BJ (cell line): ENCODE measurements at regions of chr19 and their contacts with region 1.

Region 1: GRCh38 chr19:9323919-9324583 is at the start of gene ZNF559:
- DNase-seq: peak; percentile 77
- H3K4me3 ChIP-seq: peak within 1 kb of the TSS; percentile 89
- H3K27me3 ChIP-seq: no peaks in the 10 kb centered on the region
- CTCF ChIP-seq: peak; percentile 44
- polyA plus RNA-seq, gene ZNF559: 8.2 and 15.6 TPM in 2 replicates

Region 2: GRCh38 chr19:9189538-9189937 is 134.5 kb before region 1 on chr19:
- CTCF ChIA-PET with region 1: no interaction called
- POLR2A ChIA-PET with region 1: no interaction called
- DNase-seq: no peak
- H3K4me3 ChIP-seq: no peak overlapping the region
- H3K27me3 ChIP-seq: no peaks in the 10 kb centered on the region
- CTCF ChIP-seq: no peak

Region 3: GRCh38 chr19:9309139-9309973 is 14.7 kb before region 1 on chr19 and contains the start of gene ZNF699:
- CTCF ChIA-PET with region 1: interaction called, 11 read pairs
- POLR2A ChIA-PET with region 1: no interaction called
- DNase-seq: peak; percentile 90
- H3K4me3 ChIP-seq: peak within 1 kb of the TSS; percentile 90
- H3K27me3 ChIP-seq: no peaks in the 10 kb centered on the region
- CTCF ChIP-seq: no peak
- polyA plus RNA-seq, gene ZNF699: 2.1 and 3.4 TPM in 2 replicates

Region 4: GRCh38 chr19:9584073-9584833 is 260.2 kb after region 1 on chr19 and contains the start of gene ZNF121:
- CTCF ChIA-PET with region 1: no interaction called
- POLR2A ChIA-PET with region 1: interaction called, 18 read pairs
- DNase-seq: no peak
- H3K4me3 ChIP-seq: peak within 1 kb of the TSS; percentile 75
- H3K27me3 ChIP-seq: no peaks in the 10 kb centered on the region
- CTCF ChIP-seq: no peak
- polyA plus RNA-seq, gene ZNF121: 1.7 and 4.5 TPM in 2 replicates